HepG2 (cell line): ENCODE measurements at regions of chr9 and their contacts with region 1.

Region 1: GRCh38 chr9:35814841-35815543 is at the start of gene HINT2:
- DNase-seq: peak; percentile 99
- ATAC-seq: peak; percentile 90
- H3K4me3 ChIP-seq: peak within 1 kb of the TSS; percentile 68 to 86 (median 86)
- H3K27ac ChIP-seq: peak within 1 kb of the TSS; percentile 99
- H3K4me1 ChIP-seq: peaks cover 44% of the 10 kb centered on the region
- H3K27me3 ChIP-seq: no peaks in the 10 kb centered on the region
- CTCF ChIP-seq: no peak
- EP300 ChIP-seq: no peak
- POLR2A ChIP-seq: peak; percentile 79 to 82
- RAD21 ChIP-seq: no peak
- total RNA-seq, gene HINT2: 51.4 and 56.2 TPM in 2 replicates

Region 2: GRCh38 chr9:35748858-35749514 is 66.0 kb before region 1 on chr9 and contains the starts of genes GBA2 and RGP1:
- CTCF ChIA-PET with region 1: no interaction called
- POLR2A ChIA-PET with region 1: interaction called, 10 read pairs
- in situ Hi-C with region 1: no loop called
- intact Hi-C with region 1: no loop called
- DNase-seq: peak; percentile 77
- ATAC-seq: peak; percentile 90
- H3K4me3 ChIP-seq: peak within 1 kb of the TSS; percentile 95 to 99 (median 98)
- H3K27ac ChIP-seq: peak within 1 kb of the TSS; percentile 89
- H3K4me1 ChIP-seq: peaks cover 42% of the 10 kb centered on the region
- H3K27me3 ChIP-seq: no peaks in the 10 kb centered on the region; a peak in 2 of 5 replicates
- CTCF ChIP-seq: no peak; the same call in 1 of the 2 replicates
- EP300 ChIP-seq: 0 out of 4 replicates have a peak, but pooled peaks of 1 of the 2 experiments have one; percentile 15
- POLR2A ChIP-seq: peak; percentile 59 to 68
- RAD21 ChIP-seq: no peak; the same call in 1 of the 2 replicates
- total RNA-seq, gene GBA2: 24.4 and 37.5 TPM in 2 replicates
- total RNA-seq, gene RGP1: 12.6 and 12.7 TPM in 2 replicates

Region 3: GRCh38 chr9:35790385-35791296 is 24.4 kb before region 1 on chr9:
- CTCF ChIA-PET with region 1: interaction called, 14 read pairs
- POLR2A ChIA-PET with region 1: interaction called, 3 read pairs
- in situ Hi-C with region 1: no loop called
- intact Hi-C with region 1: no loop called
- DNase-seq: peak; percentile 49
- ATAC-seq: peak; percentile 94
- H3K4me3 ChIP-seq: no peak overlapping the region
- H3K27ac ChIP-seq: no peak overlapping the region
- H3K4me1 ChIP-seq: no peaks in the 10 kb centered on the region; the same call in 1 of the 2 replicates
- H3K27me3 ChIP-seq: no peaks in the 10 kb centered on the region
- CTCF ChIP-seq: peak; percentile 94
- EP300 ChIP-seq: no peak
- POLR2A ChIP-seq: no peak
- RAD21 ChIP-seq: peak; percentile 82

Region 4: DNA sequence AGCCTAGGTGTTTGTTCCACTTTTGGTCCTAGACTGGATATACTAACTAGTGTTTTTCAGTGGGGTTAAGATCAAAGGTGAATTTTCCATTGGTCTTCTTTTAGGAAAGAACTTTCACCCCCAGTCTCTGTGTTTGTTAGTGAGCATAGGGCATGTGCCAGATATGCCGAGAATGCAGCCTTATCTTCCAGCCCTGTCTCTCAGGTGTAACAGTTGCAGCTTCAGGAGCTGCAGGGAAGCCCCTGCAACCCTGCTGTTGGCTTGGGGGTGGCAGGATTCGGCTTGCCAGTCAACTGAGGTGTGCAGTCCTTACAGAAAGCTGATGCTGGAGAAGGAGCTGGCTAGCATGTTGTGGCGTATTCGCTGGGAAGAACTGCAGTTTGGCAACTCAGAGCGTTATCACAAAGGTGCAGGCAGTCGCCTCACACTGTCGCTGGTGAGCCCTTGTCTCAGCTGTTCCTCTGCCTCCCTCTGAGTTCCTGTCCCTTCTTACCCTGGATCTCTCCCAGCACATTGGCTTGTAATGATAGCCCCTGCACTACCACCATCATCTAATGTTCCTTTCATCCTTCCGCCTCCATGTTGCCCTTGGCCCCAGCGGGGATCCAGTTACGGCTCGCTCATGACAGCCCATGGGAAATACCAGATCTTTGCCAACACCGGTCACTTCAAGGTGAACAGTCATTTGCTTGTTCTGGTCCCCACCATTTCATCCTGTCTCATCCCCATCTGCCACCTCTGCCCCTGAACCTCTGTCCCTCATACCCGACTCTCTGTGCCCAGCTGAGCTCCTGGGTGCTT is 13.5 kb before region 1 on chr9:
- CTCF ChIA-PET with region 1: no interaction called
- POLR2A ChIA-PET with region 1: interaction called, 13 read pairs
- in situ Hi-C with region 1: no loop called
- intact Hi-C with region 1: no loop called
- DNase-seq: peak; percentile 56
- ATAC-seq: peak; percentile 94
- H3K4me3 ChIP-seq: peak overlapping the region in 1 of 3 experiments; percentile 15; a peak in 2 of 6 replicates
- H3K27ac ChIP-seq: peak overlapping the region; percentile 69
- H3K4me1 ChIP-seq: peaks cover 27% of the 10 kb centered on the region
- H3K27me3 ChIP-seq: no peaks in the 10 kb centered on the region
- CTCF ChIP-seq: 0 out of 2 replicates have a peak, but pooled peaks have one; percentile 12
- EP300 ChIP-seq: peak in 1 of 2 experiments; percentile 60; a peak in 2 of 4 replicates
- POLR2A ChIP-seq: peak in 1 of 2 experiments; percentile 30; a peak in 1 of 4 replicates
- RAD21 ChIP-seq: no peak

Region 5: GRCh38 chr9:35829084-35829763 is 14.2 kb after region 1 on chr9 and contains the start of gene TMEM8B:
- CTCF ChIA-PET with region 1: no interaction called
- POLR2A ChIA-PET with region 1: interaction called, 15 read pairs
- in situ Hi-C with region 1: no loop called
- intact Hi-C with region 1: loop called (anchors 1 kb)
- DNase-seq: peak; percentile 83
- ATAC-seq: peak; percentile 90
- H3K4me3 ChIP-seq: peak within 1 kb of the TSS; percentile 61 to 81 (median 73)
- H3K27ac ChIP-seq: peak within 1 kb of the TSS; percentile 44
- H3K4me1 ChIP-seq: peaks cover 45% of the 10 kb centered on the region
- H3K27me3 ChIP-seq: no peaks in the 10 kb centered on the region
- CTCF ChIP-seq: no peak
- EP300 ChIP-seq: no peak
- POLR2A ChIP-seq: no peak
- RAD21 ChIP-seq: no peak
- total RNA-seq, gene TMEM8B: 1.5 and 2.1 TPM in 2 replicates